ENCODE measurements at regions of chr7 and their contacts with region 1.

Region 1: GRCh38 chr7:37181550-37181932 is 267.1 kb downstream of the ELMO1 start:
- DNase-seq: no peak
- ATAC-seq: no peak
- H3K4me3 ChIP-seq: no peak overlapping the region
- H3K27ac ChIP-seq: no peak overlapping the region
- H3K4me1 ChIP-seq: peaks cover 0 to 3% of the 10 kb centered on the region in 2 experiments; a peak in 2 of 4 replicates
- H3K27me3 ChIP-seq: no peaks in the 10 kb centered on the region
- CTCF ChIP-seq: no peak
- POLR2A ChIP-seq: no peak
- RAD21 ChIP-seq: no peak

Region 2: DNA sequence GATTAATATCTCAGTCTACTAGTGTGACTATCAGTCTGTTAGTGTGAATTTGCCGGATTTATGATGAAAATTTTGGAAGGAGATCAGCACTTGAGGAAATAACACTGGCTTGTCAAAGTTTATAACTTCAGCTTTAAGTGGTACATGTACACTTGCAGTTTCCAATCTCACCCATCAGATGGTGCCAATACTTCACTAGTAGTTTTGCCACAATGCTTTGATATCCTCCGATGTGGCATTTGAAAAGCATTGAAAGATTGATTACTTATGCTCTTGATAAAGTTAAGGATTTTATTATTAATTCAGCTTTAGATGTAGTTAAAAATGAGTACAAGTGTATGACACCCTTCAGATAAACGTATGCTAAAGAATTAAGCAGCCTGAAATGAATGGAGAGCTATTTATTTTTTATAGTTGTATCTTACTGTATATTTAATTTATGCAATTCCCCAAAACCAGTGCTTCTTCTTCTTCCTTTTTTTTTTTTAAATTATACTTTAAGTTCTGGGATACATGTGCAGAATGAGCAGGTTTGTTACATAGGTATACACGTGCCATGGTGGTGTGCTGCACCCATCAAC is 693.7 kb before region 1 on chr7:
- CTCF ChIA-PET with region 1: interaction called, 27 read pairs
- POLR2A ChIA-PET with region 1: no interaction called
- RAD21 ChIA-PET with region 1: interaction called in 1 of 2 experiments, 12 read pairs
- intact Hi-C with region 1: loop called (anchors 1 kb)
- DNase-seq: peak; percentile 59
- ATAC-seq: peak; percentile 67
- H3K4me3 ChIP-seq: no peak overlapping the region
- H3K27ac ChIP-seq: no peak overlapping the region
- H3K4me1 ChIP-seq: no peaks in the 10 kb centered on the region
- H3K27me3 ChIP-seq: no peaks in the 10 kb centered on the region
- CTCF ChIP-seq: peak; percentile 70 to 83 (median 82)
- POLR2A ChIP-seq: no peak
- RAD21 ChIP-seq: peak; percentile 93

Region 3: DNA sequence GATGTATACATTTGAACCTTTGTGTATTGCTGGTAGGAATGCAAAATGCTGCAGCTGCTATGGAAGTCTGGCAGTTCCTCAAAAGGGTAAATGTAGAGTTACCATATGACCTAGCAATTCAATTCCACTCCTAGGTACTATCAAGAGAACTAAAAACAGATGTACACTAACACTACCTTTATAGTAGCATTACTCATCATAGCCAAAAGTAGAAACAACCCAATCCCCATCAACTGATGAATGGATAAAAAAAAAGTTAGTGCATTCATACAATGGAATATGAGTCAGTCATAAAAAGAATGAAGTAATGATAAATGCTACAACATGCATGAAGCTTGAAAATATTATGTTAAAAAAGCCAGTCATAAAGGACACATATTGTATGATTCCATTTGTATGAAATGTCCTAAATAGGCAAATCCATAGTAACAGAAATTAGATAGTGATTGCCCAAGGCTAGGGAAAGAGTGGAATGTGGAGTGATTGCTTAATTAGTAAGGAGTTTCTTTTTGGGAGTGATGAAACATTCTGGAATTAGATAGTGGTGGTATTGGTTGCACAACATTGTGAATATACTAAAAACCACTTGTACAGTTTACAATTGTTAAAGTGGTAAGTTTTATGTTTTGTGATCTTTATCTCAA is 360.9 kb before region 1 on chr7:
- CTCF ChIA-PET with region 1: no interaction called
- POLR2A ChIA-PET with region 1: no interaction called
- RAD21 ChIA-PET with region 1: no interaction called
- intact Hi-C with region 1: loop called (anchors 10 kb)
- DNase-seq: no peak
- ATAC-seq: no peak
- H3K4me3 ChIP-seq: no peak overlapping the region
- H3K27ac ChIP-seq: no peak overlapping the region
- H3K4me1 ChIP-seq: no peaks in the 10 kb centered on the region
- H3K27me3 ChIP-seq: peaks cover 9% of the 10 kb centered on the region; the same call in 1 of the 2 replicates
- CTCF ChIP-seq: no peak
- POLR2A ChIP-seq: no peak
- RAD21 ChIP-seq: no peak

Region 4: DNA sequence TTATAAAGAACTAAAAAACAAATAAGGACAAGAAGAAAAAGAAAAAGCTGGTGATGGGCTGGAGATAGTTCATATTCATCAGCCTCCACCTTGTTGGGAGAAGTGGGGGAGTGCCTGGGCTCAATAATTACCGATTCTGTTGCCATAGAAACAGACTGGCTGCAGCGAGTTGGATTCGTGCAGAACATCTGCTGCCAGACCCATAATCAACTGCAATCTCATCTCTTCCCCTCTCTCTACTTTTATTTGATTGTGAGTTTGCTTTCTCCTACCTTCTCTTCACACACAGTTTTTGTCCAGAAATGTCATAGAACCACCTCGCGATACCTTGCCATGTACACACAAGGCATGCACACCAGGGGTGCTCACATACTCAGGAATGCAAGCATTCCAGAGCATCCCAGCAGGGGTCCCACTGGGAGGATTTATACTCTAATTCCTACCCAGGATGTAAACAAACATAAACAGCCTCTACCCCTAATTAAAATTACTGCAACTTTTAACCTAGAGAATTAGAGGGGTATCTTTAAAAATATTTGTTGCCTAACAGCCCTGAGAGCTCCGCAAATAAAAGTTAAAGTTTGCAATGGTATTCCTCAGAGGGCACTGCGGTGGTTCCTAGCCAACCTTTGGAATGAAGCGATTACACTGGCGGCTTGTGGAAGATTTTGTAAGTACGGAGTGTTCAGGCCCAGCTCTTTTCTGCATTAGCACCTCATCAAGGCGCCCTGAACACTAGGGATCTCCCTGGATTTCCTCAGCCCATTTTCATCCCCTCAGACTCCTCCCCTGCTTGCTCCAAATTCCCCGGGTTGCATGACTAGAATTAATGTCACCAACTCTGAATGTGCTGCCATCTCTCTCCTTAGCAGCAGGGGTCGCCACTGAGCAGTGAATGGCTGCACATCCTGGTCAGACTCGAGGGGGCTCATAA is 194.8 kb before region 1 on chr7:
- CTCF ChIA-PET with region 1: interaction called, 48 read pairs
- POLR2A ChIA-PET with region 1: interaction called, 3 read pairs
- RAD21 ChIA-PET with region 1: interaction called, 4 to 6 read pairs
- intact Hi-C with region 1: loop called (anchors 1 kb)
- DNase-seq: peak; percentile 34
- ATAC-seq: peak; percentile 94
- H3K4me3 ChIP-seq: no peak overlapping the region
- H3K27ac ChIP-seq: no peak overlapping the region
- H3K4me1 ChIP-seq: peaks cover 4 to 7% of the 10 kb centered on the region in 2 experiments; a peak in 3 of 4 replicates
- H3K27me3 ChIP-seq: no peaks in the 10 kb centered on the region
- CTCF ChIP-seq: peak; percentile 68 to 95 (median 89)
- POLR2A ChIP-seq: no peak
- RAD21 ChIP-seq: peak; percentile 79